Ascending aorta (tissue), 2 donors: ENCODE measurements at regions of chr2 and their contacts with region 1.

Region 1: GRCh38 chr2:24971536-24972314 is at the start of gene DNAJC27:
- DNase-seq: peak; percentile 90 to 98
- H3K4me3 ChIP-seq: peak within 1 kb of the TSS; percentile 81 to 84
- H3K27ac ChIP-seq: peak within 1 kb of the TSS; percentile 97
- H3K4me1 ChIP-seq: peaks cover 0 to 2% of the 10 kb centered on the region in 2 donors
- H3K27me3 ChIP-seq: no peaks in the 10 kb centered on the region
- CTCF ChIP-seq: no peak
- total RNA-seq, gene DNAJC27: 3.6 TPM

Region 2: DNA sequence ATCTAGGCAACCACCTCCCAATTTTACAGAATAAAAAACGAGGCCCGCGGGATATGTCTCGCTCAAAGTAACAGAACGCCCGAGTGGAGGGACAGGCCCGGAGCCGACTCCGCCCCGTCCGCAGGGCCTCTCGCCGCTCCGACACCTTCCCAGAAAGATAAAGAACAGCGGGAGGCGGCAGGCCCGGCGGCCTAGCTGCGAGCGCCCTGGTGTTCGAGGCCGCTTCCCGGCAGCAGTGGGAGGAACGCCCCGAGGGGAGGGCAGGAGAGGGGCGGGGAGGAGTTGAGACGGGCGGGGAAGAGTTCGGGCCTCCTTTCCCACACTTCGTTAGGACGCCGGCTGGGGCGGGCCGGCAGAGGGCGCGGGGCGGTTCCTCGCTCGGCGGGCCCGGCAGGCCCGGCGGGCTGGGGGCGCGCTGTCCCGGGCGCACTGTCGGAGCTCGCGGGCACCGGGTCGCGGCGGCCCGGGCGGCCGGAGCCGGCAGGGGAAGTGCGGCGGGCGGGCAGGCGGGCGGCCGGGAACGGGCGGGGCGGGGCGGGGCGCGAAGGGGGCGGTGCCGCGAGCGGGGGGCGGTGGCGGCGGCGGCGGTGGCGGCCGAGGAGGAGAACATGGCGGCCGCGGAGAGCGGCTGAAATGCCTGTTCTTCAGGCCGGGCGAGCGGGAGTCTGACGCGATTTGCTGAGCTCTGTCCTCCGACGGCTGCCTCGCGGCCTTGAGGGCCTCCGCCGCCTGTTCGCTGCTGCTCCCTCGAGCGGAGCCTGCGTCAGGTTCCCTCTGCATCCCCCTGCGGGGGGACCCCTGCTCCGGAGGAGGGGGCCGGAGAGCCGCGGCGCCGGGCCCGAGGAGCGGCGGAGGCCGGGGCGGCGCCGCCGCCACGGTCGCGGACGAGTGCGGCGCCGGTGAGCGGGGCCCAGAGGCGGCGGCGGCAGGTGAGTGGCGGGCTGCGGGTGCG is 480.8 kb before region 1 on chr2 and contains the start of gene NCOA1:
- intact Hi-C with region 1: loop called (anchors 5 kb)
- DNase-seq: peak; percentile 40 to 93
- H3K4me3 ChIP-seq: peak within 1 kb of the TSS; percentile 90 to 93
- H3K27ac ChIP-seq: peak within 1 kb of the TSS; percentile 95 to 96
- H3K4me1 ChIP-seq: peaks cover 0 to 9% of the 10 kb centered on the region in 2 donors
- H3K27me3 ChIP-seq: no peaks in the 10 kb centered on the region
- CTCF ChIP-seq: no peak
- total RNA-seq, gene NCOA1: 19.3 TPM

Region 3: GRCh38 chr2:25041928-25042320 is 70.2 kb after region 1 on chr2 and contains the start of gene EFR3B:
- intact Hi-C with region 1: loop called (anchors 1 kb)
- DNase-seq: peak; percentile 81 to 97
- H3K4me3 ChIP-seq: peak within 1 kb of the TSS; percentile 71 to 85
- H3K27ac ChIP-seq: peak within 1 kb of the TSS; percentile 75 to 77
- H3K4me1 ChIP-seq: peaks cover 2 to 16% of the 10 kb centered on the region in 2 donors
- H3K27me3 ChIP-seq: no peaks in the 10 kb centered on the region
- CTCF ChIP-seq: no peak
- total RNA-seq, gene EFR3B: 0.32 TPM

Region 4: GRCh38 chr2:25197336-25198208 is 225.8 kb after region 1 on chr2:
- intact Hi-C with region 1: loop called (anchors 2 kb)
- DNase-seq: no peak
- H3K4me3 ChIP-seq: no peak overlapping the region
- H3K27ac ChIP-seq: no peak overlapping the region
- H3K4me1 ChIP-seq: no peaks in the 10 kb centered on the region
- H3K27me3 ChIP-seq: no peaks in the 10 kb centered on the region
- CTCF ChIP-seq: no peak

Region 5: GRCh38 chr2:25673300-25674076 is 701.8 kb after region 1 on chr2 and contains the start of gene DTNB:
- intact Hi-C with region 1: loop called (anchors 5 kb)
- DNase-seq: peak; percentile 59 to 92
- H3K4me3 ChIP-seq: peak within 1 kb of the TSS; percentile 77 to 85
- H3K27ac ChIP-seq: peak within 1 kb of the TSS; percentile 83 to 84
- H3K4me1 ChIP-seq: peaks cover 8 to 11% of the 10 kb centered on the region in 2 donors
- H3K27me3 ChIP-seq: no peaks in the 10 kb centered on the region
- CTCF ChIP-seq: no peak
- total RNA-seq, gene DTNB: 22.7 TPM

Region 6: DNA sequence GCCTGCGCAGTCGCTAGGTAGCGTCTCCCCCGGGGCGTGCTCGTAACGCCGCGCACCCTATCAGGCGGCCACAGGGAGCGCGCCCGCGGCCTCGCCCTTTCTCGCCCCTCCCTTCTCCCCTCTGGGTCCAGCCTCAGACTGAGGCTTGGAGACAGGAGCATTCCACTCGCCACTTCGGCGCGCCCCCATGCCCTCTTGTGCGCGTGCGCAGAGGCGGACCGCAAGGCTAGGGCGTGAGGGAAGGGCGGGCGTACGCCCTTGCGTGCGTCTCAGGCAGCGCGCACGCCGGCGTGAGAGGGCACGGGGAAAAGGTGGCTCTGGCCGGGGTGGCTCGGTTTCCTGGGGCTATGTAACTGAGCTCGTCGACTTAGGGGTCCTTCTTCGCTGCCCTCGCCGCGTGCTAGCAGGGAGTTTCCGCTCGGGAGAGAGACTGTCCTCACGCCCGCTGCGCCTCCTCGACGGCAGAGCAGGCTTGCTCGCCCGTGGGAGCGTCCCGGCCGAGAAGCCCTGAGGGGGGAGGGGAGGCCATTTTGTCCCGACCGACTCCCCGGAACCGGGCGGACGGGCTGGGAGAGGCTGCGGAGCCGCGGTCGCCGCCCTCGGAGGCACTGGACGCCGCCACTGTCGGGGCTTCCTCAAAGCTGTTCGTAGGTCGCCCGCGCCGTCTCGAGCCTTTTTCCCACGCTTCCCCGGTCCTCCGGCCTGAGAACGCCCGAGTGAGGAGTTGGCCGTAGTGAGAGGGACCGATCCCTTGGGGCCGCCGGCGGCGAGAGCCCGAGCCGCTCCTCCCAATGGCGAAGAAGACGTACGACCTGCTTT is 1062.3 kb after region 1 on chr2 and contains the start of gene RAB10:
- intact Hi-C with region 1: loop called (anchors 5 kb)
- DNase-seq: peak; percentile 96 to 99
- H3K4me3 ChIP-seq: peak within 1 kb of the TSS; percentile 80 to 87
- H3K27ac ChIP-seq: peak within 1 kb of the TSS; percentile 96 to 98
- H3K4me1 ChIP-seq: peaks cover 3 to 24% of the 10 kb centered on the region in 2 donors
- H3K27me3 ChIP-seq: no peaks in the 10 kb centered on the region
- CTCF ChIP-seq: peak in 2 of 3 experiments; percentile 6 to 15
- total RNA-seq, gene RAB10: 181 TPM